Natural killer cell (primary cell): ENCODE measurements at regions of chr12 and their contacts with region 1.

Region 1: GRCh38 chr12:51269174-51270066 is 795 bp downstream of the SMAGP start:
- DNase-seq: peak in 1 of 2 donors; percentile 80
- ATAC-seq: peak; percentile 36 to 67 (median 37)
- H3K4me3 ChIP-seq: peak overlapping the region; percentile 17
- H3K4me3 Mint-ChIP-seq: peak overlapping the region; percentile 87
- H3K27ac ChIP-seq: peak overlapping the region; percentile 6
- H3K27ac Mint-ChIP-seq: peak overlapping the region; percentile 83 to 86
- H3K4me1 ChIP-seq: peaks cover 23% of the 10 kb centered on the region
- H3K4me1 Mint-ChIP-seq: peaks cover 39 to 40% of the 10 kb centered on the region in 2 donors
- H3K27me3 ChIP-seq: no peaks in the 10 kb centered on the region
- H3K27me3 Mint-ChIP-seq: no peaks in the 10 kb centered on the region
- CTCF ChIP-seq: no peak

Region 2: GRCh38 chr12:51307655-51308593 is 38.5 kb after region 1 on chr12:
- intact Hi-C with region 1: loop called (anchors 5 kb)
- DNase-seq: peak in 1 of 2 donors; percentile 43
- ATAC-seq: peak; percentile 56 to 63 (median 58)
- H3K4me3 ChIP-seq: no peak overlapping the region
- H3K4me3 Mint-ChIP-seq: peak overlapping the region; percentile 73
- H3K27ac ChIP-seq: peak overlapping the region; percentile 2
- H3K27ac Mint-ChIP-seq: peak overlapping the region; percentile 83 to 88
- H3K4me1 ChIP-seq: peaks cover 21% of the 10 kb centered on the region
- H3K4me1 Mint-ChIP-seq: peaks cover 73 to 78% of the 10 kb centered on the region in 2 donors
- H3K27me3 ChIP-seq: no peaks in the 10 kb centered on the region
- H3K27me3 Mint-ChIP-seq: no peaks in the 10 kb centered on the region
- CTCF ChIP-seq: no peak

Region 3: DNA sequence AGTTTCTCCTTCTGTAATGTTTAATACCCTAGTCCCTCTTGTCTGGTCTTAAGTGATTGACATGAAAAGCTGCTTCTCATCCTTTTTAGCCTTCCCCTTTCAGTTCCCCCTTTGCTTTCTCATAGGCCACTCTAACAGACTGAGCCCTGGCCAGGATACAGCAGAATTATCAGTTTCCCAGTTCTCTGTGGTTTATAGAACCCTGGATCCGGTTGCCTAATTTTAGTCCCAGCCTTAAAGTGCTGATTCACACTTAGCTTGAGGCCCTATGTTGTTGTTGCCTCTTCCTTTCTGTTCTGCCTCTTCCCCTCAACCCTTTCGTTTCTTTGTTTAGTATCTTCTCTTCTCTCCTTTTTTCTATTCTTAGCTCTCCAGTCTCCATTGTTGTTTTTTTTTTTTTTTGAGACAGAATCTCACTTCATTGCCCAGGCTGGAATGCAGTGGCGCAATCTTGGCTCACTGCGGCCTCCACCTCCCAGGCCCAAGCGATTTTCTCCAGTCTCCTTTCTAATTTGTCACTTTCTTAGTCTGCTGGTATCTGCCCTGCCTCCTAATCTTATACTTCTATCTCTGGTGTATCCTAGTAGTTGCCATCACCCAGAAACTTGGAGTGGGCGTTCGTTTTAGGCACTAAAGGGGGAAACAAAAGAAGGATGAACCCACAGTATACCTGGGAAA is 57.5 kb after region 1 on chr12:
- intact Hi-C with region 1: loop called (anchors 5 kb)
- DNase-seq: peak in 1 of 2 donors; percentile 42
- ATAC-seq: peak; percentile 19 to 47 (median 23)
- H3K4me3 ChIP-seq: no peak overlapping the region
- H3K4me3 Mint-ChIP-seq: peak overlapping the region; percentile 59
- H3K27ac ChIP-seq: peak overlapping the region; percentile 57
- H3K27ac Mint-ChIP-seq: peak overlapping the region; percentile 87 to 90
- H3K4me1 ChIP-seq: peaks cover 64% of the 10 kb centered on the region
- H3K4me1 Mint-ChIP-seq: peaks cover 67% of the 10 kb centered on the region in 2 donors
- H3K27me3 ChIP-seq: no peaks in the 10 kb centered on the region
- H3K27me3 Mint-ChIP-seq: no peaks in the 10 kb centered on the region
- CTCF ChIP-seq: no peak